Head of caudate nucleus (tissue), 42 donors: ENCODE measurements at regions of chr6 and their contacts with region 1.

Region 1: GRCh38 chr6:138517635-138518034 is 18.3 kb upstream of the NHSL1 start:
- DNase-seq: peak in 5 of 42 donors; percentile 17 to 50 (median 35)

Region 2: GRCh38 chr6:138129190-138129589 is 388.4 kb before region 1 on chr6:
- intact Hi-C with region 1: loop called (anchors 10 kb)
- DNase-seq: peak in 1 of 42 donors; percentile 3

Region 3: DNA sequence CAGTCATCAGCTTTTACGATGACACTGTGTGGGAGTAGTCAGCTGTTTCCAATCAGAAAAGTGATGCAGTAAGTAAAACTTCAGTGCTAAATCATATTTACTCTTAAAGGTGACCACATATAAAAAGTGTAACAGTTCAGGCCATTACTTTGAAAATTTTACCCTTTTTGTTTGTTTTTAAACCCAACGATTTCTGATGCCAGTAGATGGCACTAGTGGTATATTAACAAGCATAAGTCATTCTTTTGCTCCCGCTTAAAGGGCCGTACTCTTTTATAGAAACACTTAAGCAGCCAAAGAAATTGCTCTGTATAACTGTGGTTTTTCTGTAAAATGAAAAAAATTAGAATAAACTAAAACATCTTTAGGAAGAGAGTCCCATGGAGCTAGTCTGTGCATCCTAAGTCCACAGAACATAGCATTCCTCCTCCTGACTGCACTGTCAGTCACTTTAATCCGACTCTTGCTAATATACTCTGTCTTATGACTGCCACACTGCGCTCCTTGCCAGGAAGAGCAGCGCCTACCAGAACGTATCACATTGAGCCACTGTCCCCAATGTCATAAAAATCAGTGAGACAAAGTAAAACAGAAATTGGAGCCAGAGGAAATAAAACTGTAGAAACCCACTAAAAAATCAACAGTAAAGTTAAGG is 88.6 kb before region 1 on chr6:
- intact Hi-C with region 1: loop called (anchors 5 kb)
- DNase-seq: peak in 3 of 42 donors; percentile 37 to 53 (median 46)